Natural killer cell (primary cell): ENCODE measurements at regions of chr17 and their contacts with region 1.

Region 1: GRCh38 chr17:53186001-53186400 is 636.7 kb upstream of the KIF2B start:
- DNase-seq: no peak
- ATAC-seq: no peak
- H3K4me3 ChIP-seq: no peak overlapping the region
- H3K4me3 Mint-ChIP-seq: no peak overlapping the region
- H3K27ac ChIP-seq: no peak overlapping the region
- H3K27ac Mint-ChIP-seq: no peak overlapping the region
- H3K4me1 ChIP-seq: no peaks in the 10 kb centered on the region
- H3K4me1 Mint-ChIP-seq: no peaks in the 10 kb centered on the region
- H3K27me3 ChIP-seq: no peaks in the 10 kb centered on the region
- H3K27me3 Mint-ChIP-seq: no peaks in the 10 kb centered on the region
- CTCF ChIP-seq: no peak

Region 2: GRCh38 chr17:53061446-53061845 is 124.6 kb before region 1 on chr17:
- intact Hi-C with region 1: no loop called
- DNase-seq: no peak
- ATAC-seq: no peak
- H3K4me3 ChIP-seq: no peak overlapping the region
- H3K4me3 Mint-ChIP-seq: no peak overlapping the region
- H3K27ac ChIP-seq: no peak overlapping the region
- H3K27ac Mint-ChIP-seq: no peak overlapping the region
- H3K4me1 ChIP-seq: no peaks in the 10 kb centered on the region
- H3K4me1 Mint-ChIP-seq: no peaks in the 10 kb centered on the region
- H3K27me3 ChIP-seq: no peaks in the 10 kb centered on the region
- H3K27me3 Mint-ChIP-seq: no peaks in the 10 kb centered on the region
- CTCF ChIP-seq: no peak

Region 3: DNA sequence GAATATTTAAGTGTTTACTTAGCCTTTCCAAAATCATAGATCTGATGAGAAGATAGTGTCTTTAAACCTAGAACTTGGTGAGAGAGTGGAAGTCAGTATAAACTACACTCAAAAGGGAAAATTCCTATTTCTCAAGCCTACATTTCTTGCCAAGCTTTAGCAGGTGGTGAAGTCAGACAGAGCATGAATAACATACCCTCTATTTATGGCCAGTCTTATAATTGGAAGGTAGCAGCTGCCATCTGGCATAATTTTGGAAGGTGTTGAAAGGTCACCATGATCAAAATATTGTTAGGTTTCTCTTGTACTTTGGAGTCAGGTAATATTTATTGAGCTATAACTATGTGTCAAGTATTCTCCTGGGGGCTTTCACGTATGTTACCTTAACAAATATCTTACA is 92.6 kb before region 1 on chr17:
- intact Hi-C with region 1: no loop called
- DNase-seq: no peak
- ATAC-seq: no peak
- H3K4me3 ChIP-seq: no peak overlapping the region
- H3K4me3 Mint-ChIP-seq: no peak overlapping the region
- H3K27ac ChIP-seq: no peak overlapping the region
- H3K27ac Mint-ChIP-seq: no peak overlapping the region
- H3K4me1 ChIP-seq: no peaks in the 10 kb centered on the region
- H3K4me1 Mint-ChIP-seq: no peaks in the 10 kb centered on the region
- H3K27me3 ChIP-seq: no peaks in the 10 kb centered on the region
- H3K27me3 Mint-ChIP-seq: no peaks in the 10 kb centered on the region
- CTCF ChIP-seq: no peak

Region 4: GRCh38 chr17:53219821-53220220 is 33.8 kb after region 1 on chr17:
- intact Hi-C with region 1: loop called (anchors 5 kb)
- DNase-seq: no peak
- ATAC-seq: no peak
- H3K4me3 ChIP-seq: no peak overlapping the region
- H3K4me3 Mint-ChIP-seq: no peak overlapping the region
- H3K27ac ChIP-seq: no peak overlapping the region
- H3K27ac Mint-ChIP-seq: no peak overlapping the region
- H3K4me1 ChIP-seq: no peaks in the 10 kb centered on the region
- H3K4me1 Mint-ChIP-seq: no peaks in the 10 kb centered on the region
- H3K27me3 ChIP-seq: no peaks in the 10 kb centered on the region
- H3K27me3 Mint-ChIP-seq: no peaks in the 10 kb centered on the region
- CTCF ChIP-seq: no peak